ENCODE measurements at regions of chrX and their contacts with region 1.

Region 1: GRCh38 chrX:71365876-71366673 is at the start of gene TAF1:
- DNase-seq: peak; percentile 95
- ATAC-seq: peak; percentile 92
- H3K4me3 Mint-ChIP-seq: peak within 1 kb of the TSS; percentile 92
- H3K27ac Mint-ChIP-seq: peak within 1 kb of the TSS; percentile 98
- H3K4me1 Mint-ChIP-seq: peaks cover 20% of the 10 kb centered on the region
- H3K27me3 Mint-ChIP-seq: no peaks in the 10 kb centered on the region
- total RNA-seq, gene TAF1: 36.6 to 41.2 TPM

Region 2: GRCh38 chrX:71068049-71068763 is 297.9 kb before region 1 on chrX and contains the start of gene SNX12:
- CTCF ChIA-PET with region 1: no interaction called
- POLR2A ChIA-PET with region 1: no interaction called
- intact Hi-C with region 1: loop called in 1 of 2 experiments (anchors 1 kb)
- DNase-seq: peak; percentile 92
- ATAC-seq: peak; percentile 93
- H3K4me3 Mint-ChIP-seq: peak within 1 kb of the TSS; percentile 91
- H3K27ac Mint-ChIP-seq: peak within 1 kb of the TSS; percentile 93
- H3K4me1 Mint-ChIP-seq: peaks cover 17% of the 10 kb centered on the region
- H3K27me3 Mint-ChIP-seq: no peaks in the 10 kb centered on the region
- total RNA-seq, gene SNX12: 43.2 to 44.6 TPM

Region 3: DNA sequence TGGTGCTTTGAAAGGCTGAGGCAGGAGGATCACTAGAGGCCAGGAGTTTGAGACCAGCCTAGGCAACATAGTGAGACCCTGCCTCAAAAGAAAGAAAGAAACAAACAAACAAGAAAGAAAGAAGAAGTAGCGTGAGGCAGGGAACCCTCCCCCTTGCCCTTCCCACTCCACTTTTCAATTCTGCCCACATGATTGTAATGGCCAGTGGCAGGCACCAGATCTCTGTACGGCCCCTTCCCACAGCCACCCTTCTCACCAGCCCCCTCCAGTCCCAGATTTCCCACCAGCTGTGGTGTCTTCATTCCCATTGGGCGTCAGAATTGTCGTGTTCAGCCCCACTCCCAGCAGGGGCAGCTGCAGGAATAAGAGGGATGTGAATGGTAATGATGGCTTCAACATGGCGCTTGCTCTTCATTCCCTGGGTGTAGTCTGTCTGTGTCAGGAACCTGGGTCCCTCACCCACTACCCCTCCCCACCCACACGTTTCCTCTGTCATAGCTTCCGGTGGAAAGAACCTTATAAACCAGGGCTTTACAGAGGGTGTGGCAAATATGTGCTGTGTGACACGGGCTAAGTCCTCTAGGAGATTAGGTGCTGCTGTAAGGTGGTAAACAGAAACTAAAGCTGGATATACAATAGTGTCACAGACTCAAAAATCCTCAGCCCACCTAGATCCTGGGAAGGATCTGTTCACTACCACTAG is 254.8 kb before region 1 on chrX and contains the start of gene IL2RG:
- CTCF ChIA-PET with region 1: no interaction called
- POLR2A ChIA-PET with region 1: interaction called, 4 read pairs
- intact Hi-C with region 1: loop called (anchors 5 kb)
- DNase-seq: peak; percentile 83
- ATAC-seq: peak; percentile 83
- H3K4me3 Mint-ChIP-seq: peak within 1 kb of the TSS; percentile 99
- H3K27ac Mint-ChIP-seq: peak within 1 kb of the TSS; percentile 99
- H3K4me1 Mint-ChIP-seq: peaks cover 39% of the 10 kb centered on the region
- H3K27me3 Mint-ChIP-seq: no peaks in the 10 kb centered on the region
- total RNA-seq, gene IL2RG: 278 to 342 TPM

Region 4: GRCh38 chrX:71198066-71198465 is 168.0 kb before region 1 on chrX:
- CTCF ChIA-PET with region 1: interaction called, 3 read pairs
- POLR2A ChIA-PET with region 1: interaction called, 3 read pairs
- intact Hi-C with region 1: loop called in 1 of 2 experiments (anchors 5 kb)
- DNase-seq: no peak
- ATAC-seq: peak; percentile 53
- H3K4me3 Mint-ChIP-seq: peak overlapping the region; percentile 76
- H3K27ac Mint-ChIP-seq: peak overlapping the region; percentile 86
- H3K4me1 Mint-ChIP-seq: peaks cover 17% of the 10 kb centered on the region
- H3K27me3 Mint-ChIP-seq: no peaks in the 10 kb centered on the region

Region 5: GRCh38 chrX:71283403-71284143 is 82.5 kb before region 1 on chrX and contains the start of gene NONO:
- CTCF ChIA-PET with region 1: interaction called, 5 read pairs
- POLR2A ChIA-PET with region 1: interaction called, 26 read pairs
- intact Hi-C with region 1: loop called (anchors 1 kb)
- DNase-seq: peak; percentile 90
- ATAC-seq: peak; percentile 80
- H3K4me3 Mint-ChIP-seq: peak within 1 kb of the TSS; percentile 92
- H3K27ac Mint-ChIP-seq: peak within 1 kb of the TSS; percentile 98
- H3K4me1 Mint-ChIP-seq: peaks cover 9% of the 10 kb centered on the region
- H3K27me3 Mint-ChIP-seq: no peaks in the 10 kb centered on the region
- total RNA-seq, gene NONO: 508 to 1,161 TPM

Region 6: GRCh38 chrX:71510161-71510560 is 144.1 kb after region 1 on chrX:
- CTCF ChIA-PET with region 1: no interaction called
- POLR2A ChIA-PET with region 1: no interaction called
- intact Hi-C with region 1: no loop called
- DNase-seq: no peak
- ATAC-seq: no peak
- H3K4me3 Mint-ChIP-seq: no peak overlapping the region
- H3K27ac Mint-ChIP-seq: no peak overlapping the region
- H3K4me1 Mint-ChIP-seq: peaks cover 16% of the 10 kb centered on the region
- H3K27me3 Mint-ChIP-seq: no peaks in the 10 kb centered on the region